ENCODE measurements at regions of chr7 and their contacts with region 1.

Region 1: GRCh38 chr7:76314042-76314721 is 11.7 kb downstream of the HSPB1 start:
- DNase-seq: peak; percentile 94 to 96
- H3K4me3 ChIP-seq: no peak overlapping the region
- H3K4me3 Mint-ChIP-seq: no peak overlapping the region
- H3K27ac Mint-ChIP-seq: peak overlapping the region; percentile 53
- H3K4me1 ChIP-seq: peaks cover 8% of the 10 kb centered on the region
- H3K4me1 Mint-ChIP-seq: peaks cover 13% of the 10 kb centered on the region
- H3K27me3 ChIP-seq: no peaks in the 10 kb centered on the region
- H3K27me3 Mint-ChIP-seq: no peaks in the 10 kb centered on the region
- CTCF ChIP-seq: peak; percentile 99

Region 2: GRCh38 chr7:75937958-75938786 is 376.0 kb before region 1 on chr7:
- CTCF ChIA-PET with region 1: no interaction called
- POLR2A ChIA-PET with region 1: no interaction called
- intact Hi-C with region 1: no loop called
- DNase-seq: peak; percentile 46 to 59
- H3K4me3 ChIP-seq: no peak overlapping the region
- H3K4me3 Mint-ChIP-seq: no peak overlapping the region
- H3K27ac Mint-ChIP-seq: peak overlapping the region; percentile 43
- H3K4me1 ChIP-seq: peaks cover 15% of the 10 kb centered on the region
- H3K4me1 Mint-ChIP-seq: peaks cover 18% of the 10 kb centered on the region
- H3K27me3 ChIP-seq: no peaks in the 10 kb centered on the region
- H3K27me3 Mint-ChIP-seq: no peaks in the 10 kb centered on the region
- CTCF ChIP-seq: no peak

Region 3: DNA sequence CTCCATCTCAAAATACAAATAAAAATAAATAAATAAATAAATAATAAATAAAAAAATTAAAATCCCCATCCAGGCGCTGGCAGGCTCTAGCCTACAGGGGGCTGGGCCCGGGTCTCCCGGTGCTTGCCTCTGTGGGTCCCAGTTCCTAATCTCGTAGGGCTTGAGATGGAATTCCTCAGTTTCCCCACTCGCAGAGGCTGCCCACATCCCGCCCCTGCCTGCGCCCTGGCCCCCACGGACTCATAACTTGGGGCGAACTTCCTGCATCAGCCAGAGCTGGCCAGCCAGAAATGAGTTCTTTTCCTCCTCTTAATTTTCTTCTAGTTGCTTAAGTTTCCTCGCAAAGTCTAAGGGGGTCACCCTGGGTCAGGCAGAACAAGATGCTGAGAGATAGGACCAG is 134.5 kb before region 1 on chr7:
- CTCF ChIA-PET with region 1: interaction called, 18 read pairs
- POLR2A ChIA-PET with region 1: no interaction called
- intact Hi-C with region 1: loop called (anchors 1 kb)
- DNase-seq: no peak
- H3K4me3 ChIP-seq: no peak overlapping the region
- H3K4me3 Mint-ChIP-seq: no peak overlapping the region
- H3K27ac Mint-ChIP-seq: no peak overlapping the region
- H3K4me1 ChIP-seq: no peaks in the 10 kb centered on the region
- H3K4me1 Mint-ChIP-seq: peaks cover 6% of the 10 kb centered on the region
- H3K27me3 ChIP-seq: no peaks in the 10 kb centered on the region
- H3K27me3 Mint-ChIP-seq: peaks cover 5% of the 10 kb centered on the region
- CTCF ChIP-seq: no peak

Region 4: DNA sequence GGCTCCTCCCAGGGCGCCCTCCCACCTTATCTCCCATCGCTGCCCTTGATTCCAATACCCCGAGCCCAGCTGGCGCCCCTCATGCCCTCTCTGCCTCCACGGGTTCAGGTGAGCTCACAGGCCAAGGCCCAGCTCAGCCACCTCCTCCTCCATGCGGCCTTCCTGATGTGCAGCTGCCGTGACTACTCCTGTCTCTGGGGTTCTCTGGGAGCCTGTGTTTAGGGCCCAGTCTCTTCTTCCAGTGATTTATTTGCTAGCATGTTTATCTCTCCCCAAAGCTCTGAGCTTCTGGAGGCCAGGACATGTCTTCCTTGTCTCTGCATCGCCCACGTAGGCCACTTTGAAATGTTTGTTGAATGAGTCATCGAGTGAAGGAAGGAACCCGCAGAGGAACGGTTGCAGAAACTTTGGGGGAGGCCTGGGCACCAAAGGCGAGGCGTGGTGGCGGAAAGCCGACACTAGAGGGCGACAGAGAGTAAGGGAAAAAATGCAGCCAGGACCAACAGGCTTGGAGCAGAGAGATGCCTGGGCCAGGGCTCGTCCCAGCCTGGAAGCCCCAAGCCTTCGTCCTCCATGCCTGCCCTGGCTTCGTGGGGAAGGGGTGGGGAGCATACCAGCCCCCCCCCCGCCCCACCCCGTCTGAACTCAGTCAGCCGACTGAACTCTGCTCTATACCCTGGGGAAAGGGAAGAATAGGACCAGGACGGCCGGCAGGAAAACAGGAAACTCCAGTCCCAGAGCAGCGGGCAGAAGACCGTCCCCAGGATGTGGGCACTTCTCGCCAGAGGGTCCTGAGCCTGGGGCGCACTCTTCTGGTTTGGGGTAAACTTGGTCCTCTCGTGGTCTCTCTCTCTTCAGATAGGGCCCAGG is 22.6 kb before region 1 on chr7:
- CTCF ChIA-PET with region 1: interaction called, 22 read pairs
- POLR2A ChIA-PET with region 1: no interaction called
- intact Hi-C with region 1: loop called (anchors 1 kb)
- DNase-seq: peak; percentile 92 to 93
- H3K4me3 ChIP-seq: peak overlapping the region; percentile 18; the same call in 1 of the 2 replicates
- H3K4me3 Mint-ChIP-seq: peak overlapping the region; percentile 17
- H3K27ac Mint-ChIP-seq: peak overlapping the region; percentile 36
- H3K4me1 ChIP-seq: peaks cover 33% of the 10 kb centered on the region
- H3K4me1 Mint-ChIP-seq: peaks cover 22% of the 10 kb centered on the region
- H3K27me3 ChIP-seq: no peaks in the 10 kb centered on the region
- H3K27me3 Mint-ChIP-seq: no peaks in the 10 kb centered on the region
- CTCF ChIP-seq: peak; percentile 97 to 98

Region 5: DNA sequence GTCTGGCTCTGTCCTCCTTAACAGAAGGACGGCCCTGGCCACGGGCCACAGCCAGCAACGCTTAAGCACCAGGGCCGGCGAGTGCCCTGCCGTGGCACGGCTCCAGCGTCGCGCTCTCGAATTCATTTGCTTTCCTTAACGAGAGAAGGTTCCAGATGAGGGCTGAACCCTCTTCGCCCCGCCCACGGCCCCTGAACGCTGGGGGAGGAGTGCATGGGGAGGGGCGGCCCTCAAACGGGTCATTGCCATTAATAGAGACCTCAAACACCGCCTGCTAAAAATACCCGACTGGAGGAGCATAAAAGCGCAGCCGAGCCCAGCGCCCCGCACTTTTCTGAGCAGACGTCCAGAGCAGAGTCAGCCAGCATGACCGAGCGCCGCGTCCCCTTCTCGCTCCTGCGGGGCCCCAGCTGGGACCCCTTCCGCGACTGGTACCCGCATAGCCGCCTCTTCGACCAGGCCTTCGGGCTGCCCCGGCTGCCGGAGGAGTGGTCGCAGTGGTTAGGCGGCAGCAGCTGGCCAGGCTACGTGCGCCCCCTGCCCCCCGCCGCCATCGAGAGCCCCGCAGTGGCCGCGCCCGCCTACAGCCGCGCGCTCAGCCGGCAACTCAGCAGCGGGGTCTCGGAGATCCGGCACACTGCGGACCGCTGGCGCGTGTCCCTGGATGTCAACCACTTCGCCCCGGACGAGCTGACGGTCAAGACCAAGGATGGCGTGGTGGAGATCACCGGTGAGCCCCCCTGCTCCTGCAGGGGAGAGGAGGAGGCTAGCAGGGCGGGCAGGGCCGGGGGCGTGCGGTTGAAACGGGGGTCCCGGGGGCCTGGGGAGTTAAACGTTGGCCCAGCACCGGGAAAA is 11.6 kb before region 1 on chr7 and contains the start of gene HSPB1:
- CTCF ChIA-PET with region 1: interaction called, 24 read pairs
- POLR2A ChIA-PET with region 1: no interaction called
- intact Hi-C with region 1: loop called (anchors 1 kb)
- DNase-seq: peak; percentile 82 to 86
- H3K4me3 ChIP-seq: peak within 1 kb of the TSS; percentile 77
- H3K4me3 Mint-ChIP-seq: peak within 1 kb of the TSS; percentile 91
- H3K27ac Mint-ChIP-seq: peak within 1 kb of the TSS; percentile 77
- H3K4me1 ChIP-seq: peaks cover 18% of the 10 kb centered on the region
- H3K4me1 Mint-ChIP-seq: peaks cover 6% of the 10 kb centered on the region
- H3K27me3 ChIP-seq: no peaks in the 10 kb centered on the region
- H3K27me3 Mint-ChIP-seq: no peaks in the 10 kb centered on the region
- CTCF ChIP-seq: no peak
- total RNA-seq, gene HSPB1: 82.1 and 89.1 TPM in 2 replicates

Region 6: GRCh38 chr7:76393116-76394031 is 79.2 kb after region 1 on chr7:
- CTCF ChIA-PET with region 1: no interaction called
- POLR2A ChIA-PET with region 1: no interaction called
- intact Hi-C with region 1: loop called (anchors 2 kb)
- DNase-seq: peak; percentile 96 to 97
- H3K4me3 ChIP-seq: peak overlapping the region; percentile 55
- H3K4me3 Mint-ChIP-seq: peak overlapping the region; percentile 78
- H3K27ac Mint-ChIP-seq: peak overlapping the region; percentile 90
- H3K4me1 ChIP-seq: peaks cover 23% of the 10 kb centered on the region
- H3K4me1 Mint-ChIP-seq: peaks cover 7% of the 10 kb centered on the region
- H3K27me3 ChIP-seq: no peaks in the 10 kb centered on the region
- H3K27me3 Mint-ChIP-seq: no peaks in the 10 kb centered on the region
- CTCF ChIP-seq: no peak